ENCODE measurements at regions of chr18 and their contacts with region 1.

Region 1: DNA sequence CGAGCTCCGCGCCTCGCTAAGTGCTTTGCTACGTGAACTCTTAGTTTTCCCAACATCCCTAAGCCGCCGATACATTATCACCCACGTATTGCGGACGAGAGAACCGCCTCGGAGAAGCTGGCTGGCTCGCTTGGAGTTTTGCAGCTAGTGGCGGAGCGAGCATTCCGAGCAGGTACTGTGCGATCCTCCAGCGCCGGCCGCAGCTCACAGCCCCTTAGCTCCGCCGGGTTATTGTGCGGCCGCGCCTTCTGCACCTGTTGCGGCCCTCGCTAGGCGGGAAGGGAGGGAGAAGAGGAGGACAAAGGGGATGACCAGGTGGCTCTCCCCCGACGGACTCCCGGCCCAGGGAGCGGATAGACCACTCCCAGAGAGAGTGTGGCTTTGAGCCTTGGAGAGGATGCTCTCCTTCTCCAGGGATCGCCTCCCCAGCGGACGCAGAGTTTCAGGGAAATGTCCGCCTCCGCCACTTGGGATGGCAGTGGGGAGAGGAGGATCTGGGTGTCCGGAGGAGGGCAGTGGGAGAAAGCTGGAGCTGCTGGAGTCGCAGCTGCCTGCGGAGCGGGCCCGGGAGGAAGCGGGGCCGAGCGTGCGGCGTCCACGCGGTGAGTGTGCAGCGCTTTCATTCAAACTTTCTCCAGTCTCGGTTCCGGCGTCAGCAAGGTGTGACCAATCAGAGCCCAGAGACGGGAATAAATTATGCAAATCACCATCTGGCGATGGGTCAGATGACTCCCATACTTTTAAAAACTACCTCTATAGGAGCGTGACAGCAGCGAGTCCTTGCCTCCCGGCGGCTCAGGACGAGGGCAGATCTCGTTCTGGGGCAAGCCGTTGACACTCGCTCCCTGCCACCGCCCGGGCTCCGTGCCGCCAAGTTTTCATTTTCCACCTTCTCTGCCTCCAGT is at the start of gene LIPG:
- DNase-seq: no peak
- H3K4me3 ChIP-seq: peak within 1 kb of the TSS; percentile 47
- H3K27ac ChIP-seq: no peak within 1 kb of the TSS
- H3K27me3 ChIP-seq: peaks cover 60% of the 10 kb centered on the region
- CTCF ChIP-seq: no peak
- polyA plus RNA-seq, gene LIPG: 0.11 and 0.19 TPM in 2 replicates

Region 2: DNA sequence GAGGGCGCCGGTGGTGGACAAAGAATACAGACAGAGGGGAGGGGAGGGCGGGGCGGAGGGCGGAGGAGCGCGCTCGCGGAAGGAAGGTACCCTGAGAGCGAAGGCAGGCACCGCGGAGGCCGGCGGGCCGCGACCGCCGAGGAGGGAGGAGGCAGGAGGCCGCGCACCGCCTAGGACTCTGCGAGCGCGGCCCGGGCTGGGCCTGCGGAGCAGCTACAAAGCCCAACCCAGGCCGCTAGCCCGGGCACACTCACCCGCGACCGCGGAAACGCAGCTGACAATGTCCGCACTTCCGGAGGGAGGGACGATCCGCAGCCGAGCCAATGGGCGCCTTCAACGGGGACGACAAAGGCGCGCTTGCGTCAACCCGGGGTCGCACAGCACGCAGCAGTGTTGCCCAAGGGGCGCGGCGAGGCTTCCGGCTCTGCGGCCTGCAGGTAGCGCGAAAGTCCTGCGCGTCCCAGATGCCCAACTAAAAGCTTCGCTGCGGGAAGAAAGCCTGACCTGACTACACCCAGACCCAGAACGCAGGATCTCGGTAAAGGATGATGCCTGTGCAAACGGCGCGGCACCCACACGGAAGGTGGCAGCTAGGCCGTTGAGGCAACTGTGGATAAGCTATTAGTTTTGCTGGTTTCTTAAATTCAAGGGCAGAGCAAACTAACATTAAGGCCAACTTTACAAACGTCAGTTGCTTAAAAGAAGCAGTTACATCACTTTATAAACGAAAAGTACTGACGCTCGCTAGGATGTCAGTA is 74.4 kb before region 1 on chr18 and contains the start of gene C18orf32:
- CTCF ChIA-PET with region 1: no interaction called
- POLR2A ChIA-PET with region 1: interaction called, 11 read pairs
- DNase-seq: peak; percentile 80
- H3K4me3 ChIP-seq: peak within 1 kb of the TSS; percentile 89
- H3K27ac ChIP-seq: peak within 1 kb of the TSS; percentile 86
- H3K27me3 ChIP-seq: no peaks in the 10 kb centered on the region
- CTCF ChIP-seq: no peak
- polyA plus RNA-seq, gene C18orf32: 31.9 and 47.6 TPM in 2 replicates

Region 3: GRCh38 chr18:49621717-49622351 is 60.3 kb after region 1 on chr18:
- CTCF ChIA-PET with region 1: no interaction called
- POLR2A ChIA-PET with region 1: no interaction called
- DNase-seq: no peak
- H3K4me3 ChIP-seq: no peak overlapping the region
- H3K27ac ChIP-seq: no peak overlapping the region
- H3K27me3 ChIP-seq: peaks cover 39% of the 10 kb centered on the region
- CTCF ChIP-seq: no peak

Region 4: GRCh38 chr18:49717617-49718016 is 156.1 kb after region 1 on chr18:
- CTCF ChIA-PET with region 1: no interaction called
- POLR2A ChIA-PET with region 1: no interaction called
- DNase-seq: no peak
- H3K4me3 ChIP-seq: no peak overlapping the region
- H3K27ac ChIP-seq: no peak overlapping the region
- H3K27me3 ChIP-seq: peaks cover 10% of the 10 kb centered on the region
- CTCF ChIP-seq: no peak

Region 5: DNA sequence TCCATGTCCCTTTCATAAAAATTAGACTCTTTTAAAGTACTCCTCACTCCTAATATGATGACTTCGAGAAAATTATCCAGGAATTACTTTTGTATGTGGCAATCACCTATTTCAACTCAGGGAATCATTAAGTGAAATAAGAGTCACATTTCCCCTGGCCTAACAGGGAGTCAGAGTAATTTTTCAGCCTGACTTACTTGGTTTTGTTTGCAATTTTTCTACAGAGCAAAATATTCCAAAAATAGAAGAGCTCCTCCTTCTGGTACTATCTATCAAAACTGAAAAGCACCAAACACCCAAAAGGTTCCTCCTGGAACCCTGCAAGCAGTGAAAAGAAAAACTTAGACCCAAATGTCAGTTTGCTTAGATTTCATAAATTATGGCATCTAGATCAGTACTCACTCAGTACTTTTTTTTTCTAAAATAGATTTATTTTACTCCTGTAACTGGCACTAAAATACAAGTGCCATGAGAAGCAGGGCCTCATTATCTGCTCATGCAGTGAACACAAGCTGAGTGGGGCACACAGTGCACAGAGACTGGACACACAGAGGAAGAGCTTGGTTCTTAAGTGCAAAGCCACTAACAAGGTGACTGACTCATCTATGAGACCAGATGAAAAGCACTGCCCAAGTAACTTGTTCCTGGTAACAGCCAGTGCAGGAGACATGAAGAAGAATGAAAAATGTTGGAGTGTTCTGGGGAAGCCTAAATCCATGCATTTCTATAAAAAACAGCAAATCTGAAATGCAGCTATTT is 223.1 kb after region 1 on chr18:
- CTCF ChIA-PET with region 1: interaction called, 33 read pairs
- POLR2A ChIA-PET with region 1: no interaction called
- DNase-seq: no peak
- H3K4me3 ChIP-seq: no peak overlapping the region
- H3K27ac ChIP-seq: no peak overlapping the region
- H3K27me3 ChIP-seq: no peaks in the 10 kb centered on the region
- CTCF ChIP-seq: peak; percentile 42

Region 6: GRCh38 chr18:49858309-49859020 is 296.9 kb after region 1 on chr18:
- CTCF ChIA-PET with region 1: interaction called, 71 read pairs
- POLR2A ChIA-PET with region 1: no interaction called
- DNase-seq: peak; percentile 38
- H3K4me3 ChIP-seq: no peak overlapping the region
- H3K27ac ChIP-seq: no peak overlapping the region
- H3K27me3 ChIP-seq: peaks cover 16% of the 10 kb centered on the region
- CTCF ChIP-seq: peak; percentile 98

Measured in AG04450 (cell line).